Activated T-helper 1 cell treated with anti-CD3 and anti-CD28 coated beads, Interleukin-12 subunit alpha, Interleukin-12 subunit beta, Interleukin-2, Interleukin-4 antibody, amounts not matched to agents 30 ng/mL and 10 ng/mL and 1 ng/mL, durations not matched to agents 14 hours and 24 hours and 36 hours (primary cell): ENCODE measurements at regions of chr9 and their contacts with region 1.

Region 1: GRCh38 chr9:136118320-136119060 is at the start of gene TMEM250:
- DNase-seq: peak; percentile 96
- H3K4me3 Mint-ChIP-seq: peak within 1 kb of the TSS; percentile 82
- H3K27ac Mint-ChIP-seq: peak within 1 kb of the TSS; percentile 76
- H3K4me1 Mint-ChIP-seq: peaks cover 11% of the 10 kb centered on the region
- H3K27me3 Mint-ChIP-seq: no peaks in the 10 kb centered on the region
- total RNA-seq, gene TMEM250: 50.1 and 51.5 TPM in 2 replicates

Region 2: DNA sequence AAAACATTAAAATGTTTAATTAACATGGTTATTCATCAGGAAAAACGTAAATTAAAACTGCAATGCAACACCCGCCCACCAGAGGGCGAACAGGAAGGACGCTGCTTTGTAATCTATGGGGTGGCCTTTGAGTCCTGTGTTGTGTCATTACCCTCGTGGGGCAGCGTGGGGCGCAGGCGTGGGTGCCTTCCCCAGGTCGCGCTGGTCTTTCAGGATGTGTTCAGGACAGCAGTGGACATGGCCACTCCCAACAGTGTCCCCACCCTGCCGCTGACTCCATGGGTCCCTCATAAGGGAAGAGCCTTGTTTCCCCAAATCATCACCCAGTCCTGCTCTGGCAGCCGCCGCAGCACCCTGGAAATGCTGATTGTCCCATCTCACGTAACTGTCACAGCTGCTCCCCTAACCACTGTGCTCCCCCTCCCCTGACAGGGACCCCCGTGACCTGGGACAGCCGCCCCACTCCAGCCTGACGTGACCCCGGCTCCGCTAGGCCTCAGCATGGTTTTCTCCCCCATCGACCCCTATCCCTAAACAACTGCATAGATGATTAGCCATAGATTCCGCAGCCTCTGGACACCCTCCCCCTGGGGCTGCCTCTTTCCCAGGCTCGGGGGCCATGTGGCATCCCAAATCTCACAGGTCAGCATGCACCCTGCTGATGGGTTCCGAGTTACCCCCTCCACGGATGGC is 515.6 kb before region 1 on chr9:
- intact Hi-C with region 1: loop called (anchors 1 kb)
- DNase-seq: no peak
- H3K4me3 Mint-ChIP-seq: no peak overlapping the region
- H3K27ac Mint-ChIP-seq: no peak overlapping the region
- H3K4me1 Mint-ChIP-seq: no peaks in the 10 kb centered on the region
- H3K27me3 Mint-ChIP-seq: peaks cover 4% of the 10 kb centered on the region

Region 3: GRCh38 chr9:135961277-135961705 is 157.2 kb before region 1 on chr9 and contains the start of gene UBAC1:
- intact Hi-C with region 1: loop called (anchors 1 kb)
- DNase-seq: peak; percentile 93
- H3K4me3 Mint-ChIP-seq: peak within 1 kb of the TSS; percentile 87
- H3K27ac Mint-ChIP-seq: peak within 1 kb of the TSS; percentile 82
- H3K4me1 Mint-ChIP-seq: peaks cover 25% of the 10 kb centered on the region
- H3K27me3 Mint-ChIP-seq: peaks cover 8% of the 10 kb centered on the region
- total RNA-seq, gene UBAC1: 41.9 and 42.0 TPM in 2 replicates

Region 4: GRCh38 chr9:136083558-136084062 is 34.9 kb before region 1 on chr9:
- intact Hi-C with region 1: no loop called
- DNase-seq: no peak
- H3K4me3 Mint-ChIP-seq: no peak overlapping the region
- H3K27ac Mint-ChIP-seq: no peak overlapping the region
- H3K4me1 Mint-ChIP-seq: no peaks in the 10 kb centered on the region
- H3K27me3 Mint-ChIP-seq: no peaks in the 10 kb centered on the region

Region 5: DNA sequence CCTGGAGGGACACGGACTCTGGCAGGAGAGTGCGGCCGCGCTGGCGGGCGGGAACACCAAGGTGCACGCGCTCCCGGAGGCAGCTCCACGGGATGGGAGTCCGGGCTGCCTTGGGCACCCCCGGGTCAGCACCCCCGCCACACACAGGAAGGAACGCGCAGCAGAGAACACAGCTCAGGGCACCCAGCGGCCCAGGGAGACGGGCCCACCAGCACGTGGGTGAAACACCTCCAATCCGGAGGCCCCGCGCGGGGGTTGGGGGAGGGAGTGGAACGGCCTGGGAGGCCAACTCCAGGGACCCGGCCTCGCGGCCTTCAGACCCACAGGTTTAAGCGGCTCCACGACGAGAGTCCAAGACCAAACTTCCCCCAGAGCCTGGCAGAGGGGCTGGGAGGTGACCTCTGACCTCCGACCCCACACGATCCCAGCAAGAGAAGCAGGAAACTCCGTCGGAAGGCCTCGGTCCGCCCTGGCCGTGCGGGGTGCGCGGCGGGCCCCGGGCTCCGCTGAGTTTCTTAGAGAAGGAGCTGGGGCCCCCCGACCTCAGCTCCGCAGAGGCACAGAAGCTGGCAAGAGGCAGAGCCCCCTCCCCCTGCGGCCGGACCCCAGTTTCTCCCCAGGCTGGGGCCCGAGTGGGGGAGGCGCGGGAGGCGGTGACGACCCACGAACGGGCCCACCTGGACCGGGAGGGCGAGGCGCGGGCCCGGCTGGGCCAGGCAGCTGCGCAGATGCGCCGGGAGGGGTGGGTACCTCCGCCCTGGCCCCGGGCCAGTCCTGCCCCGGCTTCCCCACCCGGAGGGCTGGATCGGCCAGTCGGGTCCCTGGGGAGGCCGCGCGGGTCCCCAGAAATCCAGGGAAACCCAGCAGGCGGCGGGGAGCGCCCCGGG is 24.3 kb before region 1 on chr9:
- intact Hi-C with region 1: loop called (anchors 1 kb)
- DNase-seq: no peak
- H3K4me3 Mint-ChIP-seq: peak overlapping the region; percentile 75
- H3K27ac Mint-ChIP-seq: no peak overlapping the region
- H3K4me1 Mint-ChIP-seq: no peaks in the 10 kb centered on the region
- H3K27me3 Mint-ChIP-seq: peaks cover 8% of the 10 kb centered on the region

Region 6: DNA sequence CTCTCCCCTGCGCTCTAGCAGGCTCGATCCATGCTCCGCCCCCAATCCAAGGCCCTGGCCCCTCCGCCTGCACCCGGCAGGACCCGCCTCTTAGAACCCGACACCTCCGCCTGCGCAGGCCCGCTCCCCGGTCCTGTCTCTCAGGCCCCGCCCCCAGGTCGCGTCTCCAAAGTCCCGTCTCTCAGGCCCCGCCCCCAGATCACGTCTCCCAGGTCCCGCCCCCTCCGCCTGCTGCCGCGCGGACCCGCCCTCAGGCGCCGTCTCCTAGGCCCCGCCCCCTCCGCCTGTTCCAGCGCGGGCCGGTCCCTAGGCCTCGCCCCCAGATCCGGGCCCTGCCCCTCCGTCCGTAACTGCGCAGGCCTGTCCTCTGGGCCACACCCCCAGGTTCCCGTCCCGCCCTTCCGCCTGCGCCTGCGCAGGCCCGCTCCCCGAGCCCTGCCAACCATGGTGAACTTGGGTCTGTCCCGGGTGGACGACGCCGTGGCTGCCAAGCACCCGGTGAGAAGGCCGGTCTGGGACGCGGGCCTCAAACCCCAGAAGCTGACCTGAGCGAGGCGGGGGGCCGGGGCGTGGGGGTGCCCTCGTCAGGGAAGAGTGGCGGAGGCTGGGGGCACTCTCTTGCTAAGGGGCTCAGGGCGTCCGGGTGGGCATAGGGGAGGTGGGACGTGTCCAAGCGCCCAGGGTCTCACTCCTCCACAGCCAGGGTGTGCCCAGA is 672.6 kb after region 1 on chr9 and contains the start of gene TMEM141:
- intact Hi-C with region 1: no loop called
- DNase-seq: peak; percentile 100
- H3K4me3 Mint-ChIP-seq: peak within 1 kb of the TSS; percentile 84
- H3K27ac Mint-ChIP-seq: peak within 1 kb of the TSS; percentile 81
- H3K4me1 Mint-ChIP-seq: peaks cover 32% of the 10 kb centered on the region
- H3K27me3 Mint-ChIP-seq: peaks cover 6% of the 10 kb centered on the region
- total RNA-seq, gene TMEM141: 37.2 and 39.0 TPM in 2 replicates